Vagina (tissue), 2 donors: ENCODE measurements at regions of chr7 and their contacts with region 1.

Region 1: DNA sequence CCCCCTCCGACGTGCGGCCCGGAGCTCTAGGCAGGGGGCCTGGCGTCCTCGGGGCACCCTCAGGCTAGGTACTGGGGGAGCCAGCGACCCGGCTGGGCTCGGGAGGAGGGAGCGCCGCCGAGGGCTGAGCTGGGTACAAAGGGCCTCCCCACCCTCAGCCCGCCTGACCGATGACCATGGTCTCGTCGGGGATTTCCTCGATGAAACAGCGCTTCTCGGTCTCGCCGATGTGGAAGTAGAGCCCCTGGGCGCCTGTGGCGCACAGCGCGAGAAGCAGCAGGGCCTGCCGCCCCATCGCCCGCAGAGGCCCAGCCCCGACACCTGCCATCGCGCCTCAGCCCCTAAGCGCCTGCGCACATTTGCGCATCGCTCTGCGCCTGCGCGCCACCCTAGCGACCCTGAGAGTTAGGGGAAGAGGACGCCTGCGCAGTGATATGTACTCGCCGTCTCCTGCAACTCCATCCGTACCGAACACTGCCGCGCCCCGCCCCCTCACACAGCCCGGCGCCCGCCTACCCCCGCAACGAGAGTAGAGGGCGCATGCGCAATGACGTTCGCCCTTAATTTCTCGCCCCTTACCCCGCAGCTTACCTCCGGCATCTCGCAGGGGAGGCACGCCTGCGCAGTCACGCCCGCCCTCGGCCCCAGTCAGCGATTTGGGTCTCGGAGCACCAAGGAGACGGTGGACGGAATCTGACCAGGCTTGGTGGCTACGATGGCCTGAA is at the start of gene TMED4:
- DNase-seq: peak in 1 of 2 donors; percentile 99
- H3K4me3 ChIP-seq: peak within 1 kb of the TSS; percentile 91 to 98
- H3K27ac ChIP-seq: peak within 1 kb of the TSS; percentile 92
- H3K4me1 ChIP-seq: peaks cover 25% of the 10 kb centered on the region
- H3K27me3 ChIP-seq: no peaks in the 10 kb centered on the region
- CTCF ChIP-seq: peak in 1 of 3 experiments; percentile 6
- POLR2A ChIP-seq: peak in 1 of 2 donors; percentile 79
- total RNA-seq, gene TMED4: 102 TPM

Region 2: GRCh38 chr7:44847508-44847920 is 265.5 kb after region 1 on chr7:
- intact Hi-C with region 1: loop called (anchors 2 kb)
- DNase-seq: peak in 1 of 2 donors; percentile 90
- H3K4me3 ChIP-seq: peak overlapping the region; percentile 54 to 76
- H3K27ac ChIP-seq: peak overlapping the region; percentile 96
- H3K4me1 ChIP-seq: peaks cover 34% of the 10 kb centered on the region
- H3K27me3 ChIP-seq: no peaks in the 10 kb centered on the region
- CTCF ChIP-seq: peak; percentile 72 to 81 (median 72)
- POLR2A ChIP-seq: no peak